ENCODE measurements at regions of chr2 and their contacts with region 1.

Region 1: GRCh38 chr2:55168221-55169154 is 63.6 kb downstream of the CLHC1 start:
- DNase-seq: peak; percentile 52
- ATAC-seq: peak; percentile 61
- H3K4me3 Mint-ChIP-seq: no peak overlapping the region
- H3K27ac Mint-ChIP-seq: no peak overlapping the region
- H3K4me1 Mint-ChIP-seq: no peaks in the 10 kb centered on the region
- H3K27me3 Mint-ChIP-seq: no peaks in the 10 kb centered on the region

Region 2: GRCh38 chr2:54106631-54107454 is 1061.6 kb before region 1 on chr2:
- CTCF ChIA-PET with region 1: interaction called, 3 read pairs
- POLR2A ChIA-PET with region 1: no interaction called
- intact Hi-C with region 1: loop called in 1 of 2 experiments (anchors 5 kb)
- DNase-seq: peak; percentile 61
- ATAC-seq: peak; percentile 82
- H3K4me3 Mint-ChIP-seq: no peak overlapping the region
- H3K27ac Mint-ChIP-seq: no peak overlapping the region
- H3K4me1 Mint-ChIP-seq: peaks cover 9% of the 10 kb centered on the region
- H3K27me3 Mint-ChIP-seq: peaks cover 2% of the 10 kb centered on the region

Region 3: DNA sequence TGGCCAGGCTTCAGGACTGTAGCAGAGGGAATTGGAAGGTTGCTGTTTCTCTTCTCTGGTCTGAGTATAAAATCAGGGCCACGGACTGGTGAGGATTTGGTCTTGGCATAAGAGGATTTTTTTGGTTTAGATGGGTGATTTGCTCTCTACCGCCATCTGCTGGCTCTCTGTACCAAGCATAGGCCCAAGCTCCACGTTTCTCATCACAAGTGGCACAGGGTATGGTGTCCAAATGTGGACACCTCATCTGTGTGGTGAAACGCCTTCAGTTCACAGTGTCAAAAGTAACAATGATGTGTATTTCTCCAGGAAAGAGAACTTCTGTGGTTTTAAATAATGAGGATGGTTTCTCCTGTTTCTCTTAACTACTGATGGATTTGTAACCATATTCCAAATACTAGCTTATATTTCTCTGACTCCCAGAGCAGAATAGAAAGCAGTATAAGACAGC is 329.9 kb before region 1 on chr2:
- CTCF ChIA-PET with region 1: interaction called, 15 read pairs
- POLR2A ChIA-PET with region 1: no interaction called
- intact Hi-C with region 1: loop called in 1 of 2 experiments (anchors 5 kb)
- DNase-seq: peak; percentile 79
- ATAC-seq: peak; percentile 97
- H3K4me3 Mint-ChIP-seq: no peak overlapping the region
- H3K27ac Mint-ChIP-seq: no peak overlapping the region
- H3K4me1 Mint-ChIP-seq: no peaks in the 10 kb centered on the region
- H3K27me3 Mint-ChIP-seq: no peaks in the 10 kb centered on the region

Region 4: GRCh38 chr2:54899576-54900200 is 268.8 kb before region 1 on chr2:
- CTCF ChIA-PET with region 1: interaction called, 5 read pairs
- POLR2A ChIA-PET with region 1: no interaction called
- intact Hi-C with region 1: loop called (anchors 2 kb)
- DNase-seq: no peak
- ATAC-seq: no peak
- H3K4me3 Mint-ChIP-seq: no peak overlapping the region
- H3K27ac Mint-ChIP-seq: no peak overlapping the region
- H3K4me1 Mint-ChIP-seq: peaks cover 28% of the 10 kb centered on the region
- H3K27me3 Mint-ChIP-seq: no peaks in the 10 kb centered on the region

Region 5: DNA sequence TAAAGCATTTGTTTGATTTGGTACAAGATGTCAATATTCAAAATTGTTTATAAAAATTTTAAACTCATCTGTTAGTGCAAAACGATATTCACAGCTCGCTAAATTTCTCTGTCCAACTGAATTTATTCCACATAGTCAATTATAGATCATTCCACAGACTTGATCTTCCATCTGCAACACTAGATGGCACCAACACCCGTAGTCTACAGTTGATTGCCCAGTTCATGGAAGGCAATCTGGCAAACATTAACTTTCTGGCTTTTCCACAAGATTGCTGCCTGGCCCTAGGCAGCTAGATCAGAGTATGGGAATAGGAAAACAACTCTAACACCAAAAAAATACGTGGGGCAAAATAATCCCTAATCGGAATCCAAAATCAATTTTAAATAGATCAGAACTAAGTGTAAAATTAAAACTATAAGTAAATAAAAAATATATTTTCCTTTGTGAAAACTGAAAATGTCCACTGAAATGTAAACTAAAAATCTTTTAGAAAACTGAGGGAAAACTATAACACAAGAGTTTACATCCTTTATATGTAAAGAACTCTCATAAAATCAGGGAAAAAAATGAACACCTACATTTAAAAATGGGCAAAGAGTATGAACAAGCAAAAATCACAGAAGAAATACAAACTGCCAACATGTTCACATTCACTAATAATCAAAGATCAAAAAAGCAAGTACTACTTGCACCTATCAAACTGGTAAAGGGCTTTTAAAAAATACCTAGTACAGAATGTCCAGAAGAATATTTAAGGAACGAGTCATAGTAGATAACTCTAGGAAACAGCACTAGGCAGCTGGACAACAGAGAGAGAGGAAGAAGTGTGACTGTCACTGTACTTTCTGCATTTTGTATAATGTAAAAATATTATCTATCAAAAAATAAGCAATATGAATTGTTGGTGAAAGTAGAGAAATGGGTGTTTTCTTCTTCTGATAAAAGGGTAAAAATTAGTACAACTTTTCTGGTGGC is 153.2 kb before region 1 on chr2:
- CTCF ChIA-PET with region 1: interaction called, 5 read pairs
- POLR2A ChIA-PET with region 1: no interaction called
- intact Hi-C with region 1: loop called (anchors 1 kb)
- DNase-seq: peak; percentile 54
- ATAC-seq: peak; percentile 60
- H3K4me3 Mint-ChIP-seq: no peak overlapping the region
- H3K27ac Mint-ChIP-seq: no peak overlapping the region
- H3K4me1 Mint-ChIP-seq: peaks cover 34% of the 10 kb centered on the region
- H3K27me3 Mint-ChIP-seq: no peaks in the 10 kb centered on the region